Calu3 (cell line): ENCODE measurements at regions of chr7 and their contacts with region 1.

Region 1: DNA sequence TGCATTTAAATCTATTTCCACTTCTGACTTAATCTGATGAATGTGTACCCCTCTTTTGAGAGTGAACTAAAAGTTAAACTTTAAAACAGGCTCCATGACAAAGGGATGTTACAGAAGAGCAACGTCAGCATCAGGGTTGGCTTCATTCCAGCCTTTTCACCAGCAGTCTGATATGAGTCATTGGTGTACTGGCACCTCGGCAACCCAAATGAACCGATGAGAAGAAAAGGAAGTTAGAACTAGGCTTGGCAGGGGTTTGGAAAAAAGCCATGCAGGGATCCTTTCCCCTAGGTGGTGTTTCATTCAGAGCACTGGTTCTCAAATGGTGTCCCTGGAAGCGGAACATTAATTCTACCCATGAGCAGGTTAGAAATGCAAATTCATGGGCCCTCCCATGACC is 53.6 kb downstream of the SEC61G start:
- DNase-seq: peak; percentile 71
- H3K4me3 Mint-ChIP-seq: no peak overlapping the region
- H3K27ac Mint-ChIP-seq: no peak overlapping the region
- H3K4me1 Mint-ChIP-seq: no peaks in the 10 kb centered on the region
- H3K27me3 Mint-ChIP-seq: peaks cover 49% of the 10 kb centered on the region
- CTCF ChIP-seq: no peak

Region 2: GRCh38 chr7:54529568-54529967 is 175.9 kb before region 1 on chr7:
- CTCF ChIA-PET with region 1: no interaction called
- intact Hi-C with region 1: no loop called
- DNase-seq: no peak
- H3K4me3 Mint-ChIP-seq: no peak overlapping the region
- H3K27ac Mint-ChIP-seq: no peak overlapping the region
- H3K4me1 Mint-ChIP-seq: no peaks in the 10 kb centered on the region
- H3K27me3 Mint-ChIP-seq: peaks cover 18% of the 10 kb centered on the region
- CTCF ChIP-seq: no peak

Region 3: GRCh38 chr7:54689394-54690049 is 15.9 kb before region 1 on chr7:
- CTCF ChIA-PET with region 1: interaction called, 10 read pairs
- intact Hi-C with region 1: no loop called
- DNase-seq: no peak
- H3K4me3 Mint-ChIP-seq: no peak overlapping the region
- H3K27ac Mint-ChIP-seq: no peak overlapping the region
- H3K4me1 Mint-ChIP-seq: peaks cover 13% of the 10 kb centered on the region
- H3K27me3 Mint-ChIP-seq: peaks cover 9% of the 10 kb centered on the region
- CTCF ChIP-seq: no peak

Region 4: DNA sequence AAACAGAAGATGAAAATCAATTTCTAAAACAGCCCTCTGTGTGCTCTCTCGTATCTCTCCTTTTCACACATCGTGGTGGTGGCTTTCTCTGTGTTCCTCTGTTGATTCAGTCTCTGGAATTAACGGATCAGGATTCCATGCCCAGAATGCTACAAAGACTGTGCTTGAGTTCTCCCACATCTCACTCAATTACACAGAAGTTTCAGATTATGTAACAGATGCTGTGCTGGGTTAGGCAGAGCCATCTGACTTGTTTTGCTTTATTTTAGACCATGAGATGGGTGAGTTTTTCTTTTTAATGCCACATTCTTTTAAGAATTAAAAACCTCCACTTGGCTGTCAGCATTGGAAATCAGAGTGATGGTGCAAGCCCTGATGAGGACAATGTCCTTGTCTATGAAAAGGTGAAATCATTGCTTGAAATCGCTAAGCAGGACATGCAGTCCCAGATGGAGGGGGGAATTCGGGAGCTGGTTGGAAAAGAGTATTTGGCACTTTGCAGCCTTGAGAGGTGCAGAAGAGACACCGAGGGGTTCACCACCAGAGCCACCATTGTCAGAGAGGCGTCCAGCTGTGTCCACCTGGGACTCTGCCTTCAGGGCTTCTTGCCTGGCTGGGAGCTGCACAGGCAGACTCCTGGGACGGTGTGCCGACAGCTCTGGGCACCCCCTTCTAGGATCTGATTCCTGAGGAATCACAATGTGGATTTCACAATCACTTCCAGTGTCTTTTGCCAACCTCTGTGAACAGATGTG is 393.8 kb after region 1 on chr7:
- CTCF ChIA-PET with region 1: no interaction called
- intact Hi-C with region 1: no loop called
- DNase-seq: no peak
- H3K4me3 Mint-ChIP-seq: no peak overlapping the region
- H3K27ac Mint-ChIP-seq: no peak overlapping the region
- H3K4me1 Mint-ChIP-seq: peaks cover under 1% of the 10 kb centered on the region
- H3K27me3 Mint-ChIP-seq: no peaks in the 10 kb centered on the region
- CTCF ChIP-seq: no peak